Natural killer cell (primary cell): ENCODE measurements at regions of chr13 and their contacts with region 1.

Region 1: DNA sequence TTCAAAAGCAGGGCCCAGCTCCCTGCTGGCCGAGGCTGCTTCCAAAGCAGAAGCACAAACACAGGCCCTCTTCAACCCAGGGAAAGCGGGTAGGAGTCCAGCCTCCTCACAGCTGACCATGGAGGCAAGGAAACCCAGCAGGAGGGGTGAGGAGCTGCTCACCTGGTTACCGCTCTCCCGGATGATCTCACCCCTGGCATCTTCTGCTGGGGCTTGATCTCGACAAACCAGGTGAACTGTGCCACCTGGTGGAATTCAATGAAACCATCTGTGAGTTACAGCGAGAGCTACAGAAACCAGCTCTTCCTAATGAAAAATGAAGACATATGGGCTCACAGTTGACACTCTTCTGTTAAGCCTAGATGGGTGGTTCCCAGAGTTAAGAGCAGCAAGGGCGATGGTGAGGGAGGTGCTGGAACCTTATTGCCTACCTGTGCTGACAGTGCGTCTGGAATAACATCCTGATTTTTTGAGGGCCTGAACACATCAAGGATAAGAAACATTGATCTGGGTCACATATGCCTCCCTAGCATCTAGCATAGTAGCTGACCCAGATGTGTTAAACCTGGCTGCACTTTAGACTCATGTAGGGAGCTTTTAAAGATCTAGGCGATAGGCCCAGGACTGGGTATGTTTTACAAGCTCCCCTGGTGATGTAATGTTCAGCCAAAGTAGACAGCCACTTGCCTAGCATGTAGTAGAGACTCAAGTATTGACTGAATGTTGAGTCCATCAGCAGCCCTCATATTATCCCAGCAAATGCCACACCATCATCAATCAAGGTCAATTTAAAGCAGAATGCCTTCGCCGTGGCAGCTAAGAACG is 6.1 kb downstream of the DHRS12 start:
- DNase-seq: peak in 1 of 2 donors; percentile 84
- ATAC-seq: peak; percentile 44 to 52 (median 49)
- H3K4me3 ChIP-seq: no peak overlapping the region
- H3K4me3 Mint-ChIP-seq: no peak overlapping the region
- H3K27ac ChIP-seq: no peak overlapping the region
- H3K27ac Mint-ChIP-seq: peak overlapping the region in 1 of 2 donors; percentile 38
- H3K4me1 ChIP-seq: peaks cover 24% of the 10 kb centered on the region
- H3K4me1 Mint-ChIP-seq: peaks cover 13 to 14% of the 10 kb centered on the region in 2 donors
- H3K27me3 ChIP-seq: no peaks in the 10 kb centered on the region
- H3K27me3 Mint-ChIP-seq: peaks cover 0 to 8% of the 10 kb centered on the region in 2 donors
- CTCF ChIP-seq: peak; percentile 47

Region 2: GRCh38 chr13:51125498-51126226 is 672.2 kb before region 1 on chr13:
- intact Hi-C with region 1: loop called (anchors 5 kb)
- DNase-seq: peak in 1 of 2 donors; percentile 65
- ATAC-seq: peak; percentile 61 to 72 (median 62)
- H3K4me3 ChIP-seq: no peak overlapping the region
- H3K4me3 Mint-ChIP-seq: no peak overlapping the region
- H3K27ac ChIP-seq: no peak overlapping the region
- H3K27ac Mint-ChIP-seq: no peak overlapping the region
- H3K4me1 ChIP-seq: no peaks in the 10 kb centered on the region
- H3K4me1 Mint-ChIP-seq: peaks cover 4 to 5% of the 10 kb centered on the region in 2 donors
- H3K27me3 ChIP-seq: peaks cover 2% of the 10 kb centered on the region
- H3K27me3 Mint-ChIP-seq: peaks cover 15 to 35% of the 10 kb centered on the region in 2 donors
- CTCF ChIP-seq: peak; percentile 53

Region 3: DNA sequence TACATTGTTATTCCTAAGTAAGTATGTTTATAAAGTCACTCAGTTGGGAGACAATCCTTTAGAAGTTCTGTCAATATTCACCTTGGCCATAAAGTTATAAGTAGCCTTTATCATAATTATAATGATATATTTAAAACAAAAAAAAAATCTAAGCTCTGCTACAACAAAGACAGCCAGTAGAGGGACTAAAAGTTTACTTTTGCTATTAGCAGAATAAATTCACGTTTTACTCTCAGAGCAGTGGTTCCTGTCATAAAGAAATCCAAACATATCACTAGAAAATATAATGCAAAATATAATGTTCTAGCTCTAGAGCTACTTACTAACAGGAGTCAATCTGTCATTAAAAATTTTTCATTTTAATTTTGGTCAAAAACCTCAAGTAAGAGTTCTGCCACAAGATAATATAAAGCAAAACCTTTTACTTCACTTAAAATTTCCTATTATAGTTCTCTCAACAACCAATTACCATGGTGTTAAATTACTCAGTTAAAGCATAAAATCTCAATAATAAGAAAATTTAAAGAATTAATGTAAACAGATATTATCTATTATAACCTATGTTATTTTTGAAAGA is 362.8 kb before region 1 on chr13:
- intact Hi-C with region 1: loop called (anchors 1 kb)
- DNase-seq: peak in 1 of 2 donors; percentile 59
- ATAC-seq: peak in 2 of 3 donors; percentile 66 to 70
- H3K4me3 ChIP-seq: no peak overlapping the region
- H3K4me3 Mint-ChIP-seq: no peak overlapping the region
- H3K27ac ChIP-seq: no peak overlapping the region
- H3K27ac Mint-ChIP-seq: no peak overlapping the region
- H3K4me1 ChIP-seq: no peaks in the 10 kb centered on the region
- H3K4me1 Mint-ChIP-seq: peaks cover 3 to 15% of the 10 kb centered on the region in 2 donors
- H3K27me3 ChIP-seq: no peaks in the 10 kb centered on the region
- H3K27me3 Mint-ChIP-seq: no peaks in the 10 kb centered on the region
- CTCF ChIP-seq: peak; percentile 71

Region 4: GRCh38 chr13:51729866-51730546 is 67.9 kb before region 1 on chr13:
- intact Hi-C with region 1: no loop called
- DNase-seq: no peak
- ATAC-seq: no peak
- H3K4me3 ChIP-seq: no peak overlapping the region
- H3K4me3 Mint-ChIP-seq: no peak overlapping the region
- H3K27ac ChIP-seq: no peak overlapping the region
- H3K27ac Mint-ChIP-seq: no peak overlapping the region
- H3K4me1 ChIP-seq: peaks cover 9% of the 10 kb centered on the region
- H3K4me1 Mint-ChIP-seq: peaks cover 18 to 20% of the 10 kb centered on the region in 2 donors
- H3K27me3 ChIP-seq: no peaks in the 10 kb centered on the region
- H3K27me3 Mint-ChIP-seq: no peaks in the 10 kb centered on the region
- CTCF ChIP-seq: no peak

Region 5: GRCh38 chr13:51874651-51875050 is 76.8 kb after region 1 on chr13:
- intact Hi-C with region 1: no loop called
- DNase-seq: no peak
- ATAC-seq: no peak
- H3K4me3 ChIP-seq: no peak overlapping the region
- H3K4me3 Mint-ChIP-seq: no peak overlapping the region
- H3K27ac ChIP-seq: no peak overlapping the region
- H3K27ac Mint-ChIP-seq: no peak overlapping the region
- H3K4me1 ChIP-seq: no peaks in the 10 kb centered on the region
- H3K4me1 Mint-ChIP-seq: no peaks in the 10 kb centered on the region
- H3K27me3 ChIP-seq: no peaks in the 10 kb centered on the region
- H3K27me3 Mint-ChIP-seq: peaks cover 4 to 8% of the 10 kb centered on the region in 2 donors
- CTCF ChIP-seq: no peak